ENCODE measurements at regions of chr21 and their contacts with region 1.

Region 1: DNA sequence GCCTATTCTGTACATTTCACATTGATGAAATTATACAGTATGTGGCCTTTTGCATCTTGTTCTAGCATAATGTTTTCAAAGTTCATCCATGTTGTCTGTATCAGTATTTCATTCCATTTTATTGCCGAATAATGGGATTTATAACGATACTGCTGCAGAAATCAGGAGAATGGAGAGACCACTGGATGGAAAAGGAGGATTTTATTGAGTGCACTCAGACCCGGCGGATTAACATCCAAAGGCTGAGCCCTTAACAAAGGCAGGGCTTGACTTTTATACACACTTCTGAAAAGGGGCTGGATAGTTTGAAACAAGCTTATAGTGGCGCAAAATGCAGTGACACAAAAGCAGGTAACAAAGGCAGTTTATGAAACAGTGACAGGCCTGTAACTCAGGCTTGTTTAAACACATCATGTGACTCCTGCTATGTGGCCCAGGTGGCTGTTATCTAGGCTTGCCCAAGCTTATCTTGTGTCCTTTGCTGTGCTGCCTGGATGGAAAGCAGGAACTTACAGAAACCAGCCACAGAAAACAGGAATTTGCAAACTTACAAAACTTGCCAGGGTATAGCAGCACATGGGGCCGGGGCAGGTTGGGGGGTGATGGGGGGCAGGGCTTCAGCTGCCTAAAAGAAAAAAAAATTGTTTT is 32.8 kb upstream of the KCNJ15 start:
- DNase-seq: peak; percentile 46

Region 2: DNA sequence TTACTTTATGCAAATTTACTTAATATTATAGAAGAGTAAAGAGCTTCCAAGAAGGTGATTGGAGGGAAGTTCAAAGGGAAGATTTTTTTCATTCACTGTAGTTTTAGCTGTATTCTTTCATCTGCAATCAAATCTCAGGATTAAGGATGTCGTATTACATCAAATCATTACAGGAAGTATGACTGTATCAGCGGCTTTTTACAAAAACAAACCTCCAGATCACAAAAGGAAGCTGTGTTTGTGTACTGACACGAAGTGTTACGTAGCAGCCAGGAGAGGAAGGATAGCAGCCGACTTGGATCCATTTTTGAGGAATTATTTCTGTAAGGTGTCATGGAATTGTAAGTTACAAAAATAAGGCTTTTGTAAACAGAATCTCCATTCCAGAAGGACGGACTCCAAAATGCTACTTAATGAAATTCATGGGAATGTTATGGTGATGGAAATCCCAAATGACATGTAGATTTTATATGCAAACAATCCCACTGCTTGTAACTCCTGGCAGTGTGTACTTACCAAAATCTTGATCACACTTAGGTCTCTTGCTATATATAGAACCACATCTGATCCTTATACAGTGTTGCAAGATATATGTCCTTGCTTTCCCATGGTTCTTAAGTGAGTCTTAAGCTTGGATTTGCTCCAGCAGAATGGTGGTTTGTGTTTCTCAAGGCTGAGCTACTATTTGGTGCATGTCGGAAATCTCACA is 82.6 kb after region 1 on chr21:
- in situ Hi-C with region 1: loop called (anchors 10 kb)
- DNase-seq: no peak

Measured in Caki2 (cell line).